Left cardiac atrium (tissue), 4 donors: ENCODE measurements at regions of chr17 and their contacts with region 1.

Region 1: GRCh38 chr17:38853292-38854219 is at the start of gene RPL23:
- DNase-seq: peak; percentile 96
- ATAC-seq: peak; percentile 97 to 98
- total RNA-seq, gene RPL23: 892 to 925 TPM

Region 2: DNA sequence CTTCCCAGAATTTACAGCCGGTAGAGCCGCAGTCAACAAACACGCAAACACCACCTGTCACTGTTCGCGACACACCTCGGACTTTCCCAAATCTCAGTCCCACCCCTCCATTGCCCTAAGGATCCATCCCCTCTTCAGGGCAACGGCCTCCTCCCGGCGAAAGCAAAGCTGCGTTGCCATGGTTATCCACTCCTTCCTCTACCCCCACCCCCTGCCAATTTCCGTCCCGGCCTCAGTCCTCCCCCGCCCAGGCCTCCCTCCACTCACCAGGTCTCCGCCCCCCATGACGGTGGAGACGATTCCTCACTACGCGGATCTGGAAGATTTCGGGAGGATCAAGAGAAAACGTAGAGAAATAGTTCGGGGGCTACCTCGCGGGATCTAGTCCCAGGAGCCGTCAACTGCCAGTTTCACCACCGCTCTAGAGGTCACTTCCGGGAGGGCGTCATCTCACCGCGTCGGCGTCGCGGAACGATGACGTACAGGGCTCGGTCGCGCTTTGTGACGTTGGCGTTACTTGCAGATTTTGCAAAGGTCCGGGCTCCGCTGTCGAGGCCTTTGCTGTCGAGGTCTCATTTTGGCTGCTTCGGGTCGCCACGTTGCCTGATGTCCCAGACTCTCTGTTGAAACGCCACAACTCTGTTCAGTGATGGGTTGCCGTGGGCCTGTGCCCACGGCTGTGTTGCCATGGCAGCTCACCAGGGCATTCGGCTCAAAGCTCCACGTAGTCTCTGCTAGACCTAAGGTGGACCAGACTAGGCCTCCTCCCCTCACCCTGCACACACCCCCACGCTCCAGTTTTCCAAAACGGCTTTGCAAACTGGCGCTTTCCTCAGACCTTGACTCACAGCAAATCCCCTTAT is 28.4 kb before region 1 on chr17 and contains the start of gene CWC25:
- intact Hi-C with region 1: loop called in 1 of 2 experiments (anchors 1 kb)
- DNase-seq: peak; percentile 91
- ATAC-seq: peak; percentile 95
- total RNA-seq, gene CWC25: 8.5 to 12.1 TPM

Region 3: DNA sequence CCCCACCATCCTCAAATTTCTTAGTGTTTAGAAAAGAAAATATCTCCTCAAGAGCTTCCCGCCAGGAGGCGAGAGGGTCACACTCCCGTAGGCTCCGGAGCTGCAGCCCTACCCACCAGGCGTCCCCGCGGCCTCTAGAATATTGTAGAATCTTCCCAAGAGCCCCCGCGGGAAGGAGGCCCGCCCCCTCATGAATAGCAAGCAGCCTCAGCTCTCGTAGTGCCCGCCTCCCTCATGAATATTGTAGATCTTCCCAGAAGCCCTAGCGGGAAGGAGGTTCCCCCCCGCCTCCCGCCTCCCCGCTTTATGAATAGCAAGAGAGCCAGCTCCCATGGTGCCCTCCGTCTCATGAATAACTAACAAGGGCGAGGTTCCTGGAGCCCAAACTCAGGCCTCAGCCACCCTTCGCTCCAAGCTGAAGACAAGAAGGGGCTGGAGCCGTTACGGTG is 113.8 kb after region 1 on chr17 and contains the start of gene FBXO47:
- intact Hi-C with region 1: no loop called
- DNase-seq: peak; percentile 96
- ATAC-seq: peak; percentile 99
- total RNA-seq, gene FBXO47: not detected